ENCODE measurements at regions of chr16 and their contacts with region 1.

Region 1: DNA sequence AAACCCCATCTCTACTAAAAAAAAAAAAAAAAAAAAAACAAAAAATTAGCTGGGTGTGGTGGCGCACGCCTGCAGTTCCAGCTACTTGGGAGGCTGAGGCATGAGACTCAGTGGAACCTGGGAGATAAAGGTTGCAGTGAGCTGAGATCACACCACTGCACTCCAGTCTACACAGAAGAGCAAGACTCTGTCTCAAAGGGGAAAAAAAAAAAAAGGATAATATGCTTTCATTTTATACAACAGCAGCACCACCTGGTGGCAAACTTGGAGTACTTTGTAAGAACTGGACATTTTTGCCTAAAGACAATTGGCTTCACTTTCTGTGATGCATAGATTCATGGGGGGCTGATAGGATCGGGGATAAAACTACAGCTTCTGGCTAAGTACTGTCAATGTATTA is 8.5 kb downstream of the CHTF8 start:
- DNase-seq: peak; percentile 81
- H3K4me3 ChIP-seq: no peak overlapping the region
- H3K27ac ChIP-seq: no peak overlapping the region
- H3K4me1 ChIP-seq: no peaks in the 10 kb centered on the region
- H3K27me3 ChIP-seq: no peaks in the 10 kb centered on the region

Region 2: GRCh38 chr16:68704232-68704867 is 419.6 kb before region 1 on chr16:
- in situ Hi-C with region 1: loop called (anchors 25 kb)
- DNase-seq: peak; percentile 76
- H3K4me3 ChIP-seq: no peak overlapping the region
- H3K27ac ChIP-seq: no peak overlapping the region
- H3K4me1 ChIP-seq: no peaks in the 10 kb centered on the region
- H3K27me3 ChIP-seq: peaks cover 3% of the 10 kb centered on the region; the same call in 1 of the 2 replicates

Region 3: GRCh38 chr16:68902008-68902968 is 221.6 kb before region 1 on chr16:
- in situ Hi-C with region 1: loop called (anchors 5 kb)
- DNase-seq: peak; percentile 77
- H3K4me3 ChIP-seq: no peak overlapping the region
- H3K27ac ChIP-seq: 0 out of 2 replicates have a peak overlapping the region, but pooled peaks have one; percentile 11
- H3K4me1 ChIP-seq: peaks cover 4% of the 10 kb centered on the region; the same call in 1 of the 2 replicates
- H3K27me3 ChIP-seq: no peaks in the 10 kb centered on the region

Measured in GM23248 (cell line).